ENCODE measurements at regions of chr5 and their contacts with region 1.

Region 1: GRCh38 chr5:67165526-67166459 is 30.8 kb downstream of the CD180 start:
- DNase-seq: peak; percentile 92
- ATAC-seq: peak; percentile 86
- H3K4me3 Mint-ChIP-seq: peak overlapping the region; percentile 75
- H3K27ac Mint-ChIP-seq: peak overlapping the region; percentile 97
- H3K4me1 Mint-ChIP-seq: peaks cover 51% of the 10 kb centered on the region
- H3K27me3 Mint-ChIP-seq: no peaks in the 10 kb centered on the region
- CTCF ChIP-seq: peak; percentile 82

Region 2: DNA sequence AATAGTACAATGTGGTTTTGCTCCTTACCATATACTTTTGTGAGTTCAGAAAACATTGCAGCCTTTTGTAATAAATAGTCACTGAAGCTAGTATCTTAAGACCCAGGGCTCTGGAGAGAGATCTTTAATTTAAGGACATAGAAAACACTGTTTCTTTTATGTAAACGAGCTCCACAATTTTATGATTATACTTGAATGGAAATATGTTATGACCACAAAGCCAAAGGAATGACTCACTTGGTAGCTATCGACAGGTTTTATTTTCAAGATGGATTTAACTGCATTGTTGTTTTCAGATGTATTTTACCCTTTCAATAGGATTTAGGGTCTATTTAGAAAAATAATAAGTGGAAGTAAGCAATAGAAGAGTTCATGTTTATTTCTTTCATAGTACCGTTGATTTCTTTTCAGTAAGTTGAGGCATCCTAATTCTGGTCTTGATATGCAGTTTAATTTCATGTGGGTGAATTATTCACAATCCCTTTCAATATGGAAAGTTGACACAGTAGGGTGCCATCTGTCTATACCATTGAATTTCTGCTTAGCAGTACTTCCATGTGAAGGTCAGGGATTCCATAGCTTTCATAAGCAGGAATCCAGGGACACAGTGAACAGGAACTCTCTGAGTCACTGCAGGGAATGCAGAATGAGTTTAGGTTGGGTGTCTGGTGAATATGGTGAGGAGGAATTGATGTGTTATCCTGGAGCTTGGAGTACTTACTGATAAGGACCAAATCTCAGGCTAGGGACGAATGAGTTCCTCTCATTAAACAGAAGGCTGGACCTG is 126.8 kb before region 1 on chr5:
- CTCF ChIA-PET with region 1: no interaction called
- POLR2A ChIA-PET with region 1: no interaction called
- intact Hi-C with region 1: no loop called
- DNase-seq: no peak
- ATAC-seq: no peak
- H3K4me3 Mint-ChIP-seq: no peak overlapping the region
- H3K27ac Mint-ChIP-seq: no peak overlapping the region
- H3K4me1 Mint-ChIP-seq: peaks cover 35% of the 10 kb centered on the region
- H3K27me3 Mint-ChIP-seq: no peaks in the 10 kb centered on the region
- CTCF ChIP-seq: no peak

Region 3: DNA sequence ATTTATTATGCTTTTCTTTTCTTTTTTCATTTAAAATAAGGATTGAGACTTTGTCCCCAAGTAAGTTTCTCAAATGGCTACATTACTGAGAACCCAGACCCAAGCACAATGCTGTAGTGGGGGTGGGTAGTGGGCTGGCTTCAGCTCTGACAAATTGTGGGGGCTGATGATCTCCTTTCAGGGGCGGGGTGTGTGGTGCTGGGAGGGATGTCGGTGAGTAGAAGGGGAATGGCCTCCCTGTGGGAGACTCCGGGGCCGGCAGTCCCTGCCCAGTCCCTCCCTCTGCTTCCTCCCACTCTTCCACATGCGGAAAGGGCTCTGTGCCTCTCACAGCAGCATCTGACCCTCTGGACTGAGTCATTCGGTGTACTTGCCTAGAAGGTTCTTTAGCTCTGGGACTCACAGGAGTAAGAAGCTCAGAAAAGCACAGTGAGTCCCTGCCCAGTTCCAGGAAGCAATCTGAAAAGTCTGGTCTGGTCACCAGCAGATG is 16.6 kb after region 1 on chr5:
- CTCF ChIA-PET with region 1: interaction called, 29 read pairs
- POLR2A ChIA-PET with region 1: interaction called, 19 read pairs
- intact Hi-C with region 1: no loop called
- DNase-seq: peak; percentile 20
- ATAC-seq: peak; percentile 57
- H3K4me3 Mint-ChIP-seq: peak overlapping the region; percentile 24
- H3K27ac Mint-ChIP-seq: peak overlapping the region; percentile 82
- H3K4me1 Mint-ChIP-seq: peaks cover 45% of the 10 kb centered on the region
- H3K27me3 Mint-ChIP-seq: no peaks in the 10 kb centered on the region
- CTCF ChIP-seq: no peak

Region 4: DNA sequence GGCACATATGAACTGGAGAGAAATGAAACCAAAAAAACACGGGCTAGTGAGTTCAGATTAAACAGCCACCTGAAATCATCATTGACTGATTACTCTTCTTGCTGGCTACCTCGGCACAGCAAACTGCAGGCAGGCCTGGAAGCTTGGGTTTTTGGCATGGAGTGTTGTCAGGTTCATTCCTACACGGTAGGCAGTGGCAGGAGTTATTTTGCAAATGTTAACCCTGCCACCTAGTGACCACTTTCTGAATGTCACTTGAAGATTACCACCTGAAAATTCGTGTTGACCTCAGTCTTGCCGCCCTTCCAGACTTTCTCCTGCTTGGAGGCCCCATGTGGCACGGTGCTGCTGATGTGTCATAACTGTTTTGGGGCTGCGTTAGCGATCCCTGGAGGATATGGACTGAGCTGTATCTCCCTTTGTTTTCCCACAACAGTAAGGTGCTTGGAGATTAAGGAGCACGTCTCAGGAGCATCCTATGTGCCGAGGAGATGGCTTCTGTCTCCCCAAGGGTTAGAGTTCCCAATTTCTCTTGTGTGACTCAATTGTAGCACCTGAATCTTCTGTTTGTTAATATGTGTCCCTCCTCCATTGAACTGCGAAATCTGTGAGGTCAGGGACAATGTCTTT is 43.5 kb after region 1 on chr5:
- CTCF ChIA-PET with region 1: interaction called, 349 read pairs
- POLR2A ChIA-PET with region 1: interaction called, 44 read pairs
- intact Hi-C with region 1: loop called (anchors 2 kb)
- DNase-seq: peak; percentile 71
- ATAC-seq: peak; percentile 52
- H3K4me3 Mint-ChIP-seq: no peak overlapping the region
- H3K27ac Mint-ChIP-seq: peak overlapping the region; percentile 25
- H3K4me1 Mint-ChIP-seq: peaks cover 55% of the 10 kb centered on the region
- H3K27me3 Mint-ChIP-seq: peaks cover 2% of the 10 kb centered on the region
- CTCF ChIP-seq: peak; percentile 87

Region 5: DNA sequence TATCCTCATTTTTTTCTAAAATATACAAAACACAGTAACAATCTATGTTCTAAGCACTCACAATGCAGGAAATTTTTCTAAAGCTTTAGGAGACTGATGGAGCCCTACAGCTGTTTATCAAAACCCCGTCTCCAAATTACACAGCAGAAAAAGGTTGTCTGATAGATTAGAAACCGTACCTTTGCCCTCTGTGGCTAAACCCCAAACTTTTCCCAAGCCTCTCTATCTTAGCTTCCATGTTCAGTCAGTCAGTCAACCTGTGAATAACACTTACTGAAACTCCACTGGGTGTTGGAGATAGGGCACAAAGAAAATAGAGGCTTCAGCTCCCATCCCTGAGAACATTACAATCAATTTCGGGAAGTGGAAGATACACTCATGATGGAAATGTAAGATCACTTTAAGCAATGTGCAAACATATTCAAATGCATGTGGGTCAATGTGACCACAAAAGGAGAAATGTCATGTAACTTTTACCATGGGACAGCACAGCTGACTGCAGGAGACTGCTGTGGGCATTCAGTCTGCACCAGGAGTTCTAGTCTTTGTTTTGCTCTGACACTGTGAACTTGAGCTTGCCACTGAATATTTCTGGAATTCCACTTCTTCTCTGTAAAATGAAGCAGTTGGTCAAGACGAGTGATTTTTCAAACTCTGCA is 770.2 kb after region 1 on chr5:
- CTCF ChIA-PET with region 1: no interaction called
- POLR2A ChIA-PET with region 1: no interaction called
- intact Hi-C with region 1: no loop called
- DNase-seq: no peak
- ATAC-seq: no peak
- H3K4me3 Mint-ChIP-seq: no peak overlapping the region
- H3K27ac Mint-ChIP-seq: no peak overlapping the region
- H3K4me1 Mint-ChIP-seq: no peaks in the 10 kb centered on the region
- H3K27me3 Mint-ChIP-seq: no peaks in the 10 kb centered on the region
- CTCF ChIP-seq: no peak